ENCODE measurements at regions of chr21 and their contacts with region 1.

Region 1: GRCh38 chr21:33023574-33024200 is 2.0 kb upstream of the OLIG2 start:
- DNase-seq: peak in 1 of 3 donors; percentile 58
- H3K4me3 ChIP-seq: peak overlapping the region in 4 of 7 experiments; percentile 21 to 37 (median 34)
- H3K27ac ChIP-seq: no peak overlapping the region
- H3K4me1 ChIP-seq: peaks cover 10 to 74% (median 68%) of the 10 kb centered on the region in 4 experiments
- H3K27me3 ChIP-seq: peaks cover 17 to 100% (median 77%) of the 10 kb centered on the region in 5 experiments

Region 2: DNA sequence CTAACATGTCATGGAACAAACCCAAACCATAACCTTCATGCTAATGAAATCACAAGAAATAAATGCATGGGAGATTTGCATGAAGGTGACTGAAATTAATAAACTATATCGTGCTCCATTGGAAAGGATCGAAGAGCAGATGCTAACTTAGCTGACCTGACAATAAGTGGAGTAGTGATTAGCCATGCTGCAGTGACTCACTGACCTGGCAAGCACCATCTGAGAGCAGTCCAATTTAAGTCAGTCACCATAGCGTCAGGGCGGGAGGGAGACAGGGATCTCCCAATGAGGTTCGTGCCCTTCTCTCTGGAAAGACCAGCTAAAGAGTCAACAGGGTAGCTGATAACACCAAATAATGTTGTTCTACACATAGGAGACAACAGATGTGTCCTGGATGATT is 23.5 kb after region 1 on chr21:
- CTCF ChIA-PET with region 1: no interaction called
- POLR2A ChIA-PET with region 1: no interaction called
- DNase-seq: no peak
- H3K4me3 ChIP-seq: no peak overlapping the region
- H3K27ac ChIP-seq: no peak overlapping the region
- H3K4me1 ChIP-seq: peaks cover 0 to 3% (median 0%) of the 10 kb centered on the region in 4 experiments
- H3K27me3 ChIP-seq: no peaks in the 10 kb centered on the region

Region 3: DNA sequence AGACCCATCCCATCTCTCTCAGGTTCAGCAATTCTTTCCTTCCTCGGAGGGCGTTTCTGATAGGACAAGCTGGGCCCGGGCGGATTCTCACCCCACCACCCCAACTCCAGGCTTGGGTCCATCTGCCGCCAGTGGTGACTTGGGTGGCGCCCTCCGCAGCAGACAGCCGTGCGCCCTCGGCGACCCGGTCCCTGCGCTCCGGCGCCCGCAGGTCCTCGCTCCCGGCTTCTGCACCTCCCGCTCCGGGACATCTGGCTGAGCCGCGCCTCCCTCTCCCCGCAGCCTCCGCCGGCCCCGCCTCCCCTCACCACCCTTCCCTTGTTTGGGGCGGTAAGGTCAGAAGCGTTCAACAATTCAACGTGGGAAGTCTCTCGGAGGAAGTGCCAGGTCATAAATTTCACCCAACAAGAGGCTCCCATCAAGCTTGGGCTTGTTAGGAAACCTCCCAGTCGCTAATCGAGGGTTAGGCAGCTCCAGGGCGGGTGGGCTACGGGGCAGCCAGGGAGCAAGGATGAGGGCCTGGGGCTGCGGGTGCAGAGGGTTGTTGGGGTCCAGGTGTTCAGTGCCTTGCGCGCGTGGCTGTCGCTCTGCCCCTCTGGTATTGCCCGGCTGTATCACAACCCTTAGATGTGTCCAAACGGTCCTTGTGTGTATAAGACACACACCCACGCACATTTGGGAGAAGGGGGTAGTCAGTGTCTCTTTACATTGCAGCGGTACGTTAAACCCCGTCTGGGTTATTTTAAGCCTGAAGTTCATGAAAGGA is 86.1 kb after region 1 on chr21:
- CTCF ChIA-PET with region 1: no interaction called
- POLR2A ChIA-PET with region 1: no interaction called
- DNase-seq: peak; percentile 64 to 84 (median 80)
- H3K4me3 ChIP-seq: peak overlapping the region in 6 of 7 experiments; percentile 21 to 72 (median 54)
- H3K27ac ChIP-seq: no peak overlapping the region
- H3K4me1 ChIP-seq: peaks cover 3 to 14% (median 13%) of the 10 kb centered on the region in 4 experiments
- H3K27me3 ChIP-seq: peaks cover 0 to 21% (median 0%) of the 10 kb centered on the region in 5 experiments

Region 4: GRCh38 chr21:33127154-33127893 is 103.6 kb after region 1 on chr21:
- CTCF ChIA-PET with region 1: interaction called, 10 read pairs
- POLR2A ChIA-PET with region 1: no interaction called
- DNase-seq: peak; percentile 62 to 73 (median 67)
- H3K4me3 ChIP-seq: peak overlapping the region in 6 of 7 experiments; percentile 48 to 84 (median 62)
- H3K27ac ChIP-seq: no peak overlapping the region
- H3K4me1 ChIP-seq: peaks cover 0 to 14% (median 8%) of the 10 kb centered on the region in 4 experiments
- H3K27me3 ChIP-seq: peaks cover 0 to 17% (median 7%) of the 10 kb centered on the region in 5 experiments